GM18951 (cell line): ENCODE measurements at regions of chr2 and their contacts with region 1.

Region 1: GRCh38 chr2:36329746-36330472 is 25.7 kb upstream of the CRIM1 start:
- POLR2A ChIP-seq: no peak

Region 2: DNA sequence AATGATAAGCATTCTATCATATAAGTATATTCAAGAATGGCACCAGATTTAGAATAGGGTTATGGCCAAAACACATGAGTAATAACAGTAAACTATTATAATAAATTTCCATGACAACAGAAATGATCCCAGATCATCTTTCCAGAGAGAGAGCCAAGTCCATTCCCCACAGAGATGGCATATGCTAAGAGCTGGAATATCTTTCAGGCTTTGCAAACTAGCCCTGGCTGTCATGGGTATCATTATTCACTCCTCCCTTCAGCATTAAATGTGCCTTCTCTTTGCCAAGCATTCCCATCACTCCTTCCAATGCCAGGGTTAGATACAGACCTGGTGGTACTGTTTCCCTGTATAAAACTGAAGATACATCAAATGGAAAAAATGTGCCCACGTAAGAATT is 257.2 kb after region 1 on chr2:
- in situ Hi-C with region 1: no loop called
- POLR2A ChIP-seq: no peak

Region 3: GRCh38 chr2:36663851-36664695 is 334.2 kb after region 1 on chr2:
- in situ Hi-C with region 1: loop called (anchors 25 kb)
- POLR2A ChIP-seq: no peak

Region 4: DNA sequence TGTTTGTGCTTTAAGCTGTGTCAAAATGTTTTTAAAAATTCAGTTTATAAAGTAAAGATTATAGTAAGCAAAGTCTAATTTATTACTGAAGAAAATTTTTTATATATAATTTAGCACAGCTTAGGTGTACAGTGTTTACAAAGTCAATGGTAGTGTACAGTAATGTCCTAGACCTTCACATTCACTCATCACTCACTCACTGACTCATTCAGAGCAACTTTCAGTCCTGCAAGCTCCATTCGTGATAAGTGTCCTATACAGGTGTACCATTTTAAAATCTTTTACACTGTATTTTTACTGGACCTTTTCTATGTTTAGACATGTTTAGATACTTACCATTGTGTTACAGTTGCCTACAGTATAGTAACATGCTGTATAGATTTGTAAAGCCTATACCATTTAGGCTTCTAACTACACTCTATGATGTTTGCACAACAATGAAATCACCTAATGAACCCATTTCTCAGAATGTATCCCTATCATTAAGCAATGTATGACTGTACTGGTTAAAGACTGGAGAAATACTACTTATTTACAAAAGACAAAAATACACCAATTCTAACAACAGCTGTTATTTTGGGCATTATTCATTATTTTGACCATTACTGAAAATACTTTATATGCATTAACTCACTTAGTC is 541.3 kb after region 1 on chr2:
- in situ Hi-C with region 1: no loop called
- POLR2A ChIP-seq: no peak